GM12878 (cell line): ENCODE measurements at regions of chr20 and their contacts with region 1.

Region 1: GRCh38 chr20:36605399-36606157 is at the start of gene RAB5IF:
- DNase-seq: peak; percentile 99
- ATAC-seq: peak; percentile 92
- H3K4me3 ChIP-seq: peak within 1 kb of the TSS; percentile 98
- H3K27ac ChIP-seq: peak within 1 kb of the TSS; percentile 97
- H3K4me1 ChIP-seq: peaks cover 20% of the 10 kb centered on the region
- H3K27me3 ChIP-seq: no peaks in the 10 kb centered on the region
- CTCF ChIP-seq: peak; percentile 94 to 99 (median 96); a peak in 5 of 6 replicates
- EP300 ChIP-seq: peak in 1 of 2 experiments; percentile 54; a peak in 1 of 4 replicates
- POLR2A ChIP-seq: peak; percentile 96
- RAD21 ChIP-seq: peak; percentile 61
- polyA plus RNA-seq, gene RAB5IF: 19.4 to 62.9 TPM

Region 2: GRCh38 chr20:36555248-36555647 is 50.3 kb before region 1 on chr20:
- CTCF ChIA-PET with region 1: interaction called, 33 read pairs
- POLR2A ChIA-PET with region 1: interaction called, 7 read pairs
- RAD21 ChIA-PET with region 1: interaction called, 18 read pairs
- SMC1A ChIA-PET with region 1: interaction called, 18 read pairs
- in situ Hi-C with region 1: no loop called
- intact Hi-C with region 1: loop called (anchors 5 kb)
- DNase-seq: no peak
- ATAC-seq: no peak
- H3K4me3 ChIP-seq: no peak overlapping the region
- H3K27ac ChIP-seq: no peak overlapping the region
- H3K4me1 ChIP-seq: no peaks in the 10 kb centered on the region
- H3K27me3 ChIP-seq: no peaks in the 10 kb centered on the region
- CTCF ChIP-seq: no peak
- EP300 ChIP-seq: no peak
- POLR2A ChIP-seq: no peak
- RAD21 ChIP-seq: no peak

Region 3: DNA sequence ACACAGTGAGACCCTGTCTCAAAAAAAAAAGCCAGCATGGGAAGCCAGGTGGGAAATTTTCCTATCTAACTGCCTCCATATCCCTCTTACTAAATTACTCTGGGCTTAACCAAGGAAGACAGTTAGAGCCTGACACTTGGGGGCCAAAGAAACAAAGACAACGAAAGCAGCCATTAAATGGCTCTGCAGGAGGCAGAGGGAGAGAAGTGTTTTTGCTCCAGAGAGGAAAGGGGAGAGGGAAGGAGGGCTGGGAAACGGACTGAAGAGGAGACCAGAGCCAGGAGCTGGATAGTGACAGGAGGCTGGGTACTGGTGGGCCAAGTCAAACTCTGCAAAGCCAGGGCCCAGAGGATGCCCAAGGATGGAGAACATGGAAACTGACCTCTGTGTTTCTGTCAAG is 42.9 kb before region 1 on chr20:
- CTCF ChIA-PET with region 1: interaction called, 33 read pairs
- POLR2A ChIA-PET with region 1: interaction called, 7 read pairs
- RAD21 ChIA-PET with region 1: interaction called, 18 read pairs
- SMC1A ChIA-PET with region 1: interaction called, 18 read pairs
- in situ Hi-C with region 1: no loop called
- intact Hi-C with region 1: loop called (anchors 5 kb)
- DNase-seq: no peak
- ATAC-seq: no peak
- H3K4me3 ChIP-seq: no peak overlapping the region
- H3K27ac ChIP-seq: no peak overlapping the region
- H3K4me1 ChIP-seq: no peaks in the 10 kb centered on the region
- H3K27me3 ChIP-seq: no peaks in the 10 kb centered on the region
- CTCF ChIP-seq: no peak
- EP300 ChIP-seq: no peak
- POLR2A ChIP-seq: no peak
- RAD21 ChIP-seq: no peak

Region 4: GRCh38 chr20:36573103-36573794 is 32.3 kb before region 1 on chr20 and contains the start of gene TGIF2:
- CTCF ChIA-PET with region 1: interaction called, 94 read pairs
- POLR2A ChIA-PET with region 1: interaction called, 53 read pairs
- RAD21 ChIA-PET with region 1: interaction called, 76 read pairs
- SMC1A ChIA-PET with region 1: interaction called, 83 read pairs
- in situ Hi-C with region 1: no loop called
- intact Hi-C with region 1: loop called (anchors 1 kb)
- DNase-seq: peak; percentile 48
- ATAC-seq: peak; percentile 81
- H3K4me3 ChIP-seq: peak within 1 kb of the TSS; percentile 94
- H3K27ac ChIP-seq: peak within 1 kb of the TSS; percentile 96
- H3K4me1 ChIP-seq: peaks cover 5% of the 10 kb centered on the region
- H3K27me3 ChIP-seq: no peaks in the 10 kb centered on the region
- CTCF ChIP-seq: no peak
- EP300 ChIP-seq: 0 out of 4 replicates have a peak, but pooled peaks of 1 of the 2 experiments have one; percentile 27
- POLR2A ChIP-seq: peak; percentile 85
- RAD21 ChIP-seq: no peak
- polyA plus RNA-seq, gene TGIF2: 13.1 to 26.4 TPM

Region 5: DNA sequence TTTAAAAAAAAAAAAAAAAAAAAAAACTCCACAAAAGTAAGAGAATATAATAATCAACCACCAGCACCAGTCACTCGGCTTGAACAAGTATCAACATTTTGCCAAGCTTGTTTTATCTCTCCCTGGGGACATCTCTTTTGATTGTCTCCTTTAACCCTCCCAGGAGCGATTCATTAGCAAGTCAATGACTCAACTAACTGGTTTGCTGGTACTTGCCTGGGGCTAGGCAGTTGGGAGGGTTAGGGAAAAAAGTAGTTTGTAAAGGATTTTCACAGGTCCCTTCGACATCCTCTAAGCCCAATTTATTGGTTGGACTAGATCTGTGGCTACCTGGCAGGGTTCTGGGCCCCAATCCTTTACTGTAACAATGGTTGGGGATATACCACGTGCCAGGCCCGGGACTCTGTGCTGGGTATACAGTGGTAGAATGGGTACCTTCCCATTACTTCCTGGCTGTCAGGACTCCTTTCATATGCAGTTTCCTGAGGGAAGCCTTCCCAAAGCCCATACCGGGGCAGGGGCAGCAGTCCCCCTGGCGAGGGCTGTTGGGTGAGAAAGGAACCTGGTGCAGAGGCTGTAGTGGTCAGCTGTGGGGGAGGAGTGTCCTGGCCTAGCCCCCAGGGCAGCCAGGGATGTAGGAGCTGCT is 20.0 kb before region 1 on chr20:
- CTCF ChIA-PET with region 1: interaction called, 10 read pairs
- POLR2A ChIA-PET with region 1: interaction called, 17 read pairs
- RAD21 ChIA-PET with region 1: interaction called, 7 read pairs
- SMC1A ChIA-PET with region 1: interaction called, 32 read pairs
- in situ Hi-C with region 1: no loop called
- intact Hi-C with region 1: no loop called
- DNase-seq: no peak
- ATAC-seq: no peak
- H3K4me3 ChIP-seq: no peak overlapping the region
- H3K27ac ChIP-seq: no peak overlapping the region
- H3K4me1 ChIP-seq: peaks cover 5% of the 10 kb centered on the region
- H3K27me3 ChIP-seq: no peaks in the 10 kb centered on the region
- CTCF ChIP-seq: no peak
- EP300 ChIP-seq: no peak
- POLR2A ChIP-seq: no peak; the same call in 1 of the 2 replicates
- RAD21 ChIP-seq: no peak

Region 6: DNA sequence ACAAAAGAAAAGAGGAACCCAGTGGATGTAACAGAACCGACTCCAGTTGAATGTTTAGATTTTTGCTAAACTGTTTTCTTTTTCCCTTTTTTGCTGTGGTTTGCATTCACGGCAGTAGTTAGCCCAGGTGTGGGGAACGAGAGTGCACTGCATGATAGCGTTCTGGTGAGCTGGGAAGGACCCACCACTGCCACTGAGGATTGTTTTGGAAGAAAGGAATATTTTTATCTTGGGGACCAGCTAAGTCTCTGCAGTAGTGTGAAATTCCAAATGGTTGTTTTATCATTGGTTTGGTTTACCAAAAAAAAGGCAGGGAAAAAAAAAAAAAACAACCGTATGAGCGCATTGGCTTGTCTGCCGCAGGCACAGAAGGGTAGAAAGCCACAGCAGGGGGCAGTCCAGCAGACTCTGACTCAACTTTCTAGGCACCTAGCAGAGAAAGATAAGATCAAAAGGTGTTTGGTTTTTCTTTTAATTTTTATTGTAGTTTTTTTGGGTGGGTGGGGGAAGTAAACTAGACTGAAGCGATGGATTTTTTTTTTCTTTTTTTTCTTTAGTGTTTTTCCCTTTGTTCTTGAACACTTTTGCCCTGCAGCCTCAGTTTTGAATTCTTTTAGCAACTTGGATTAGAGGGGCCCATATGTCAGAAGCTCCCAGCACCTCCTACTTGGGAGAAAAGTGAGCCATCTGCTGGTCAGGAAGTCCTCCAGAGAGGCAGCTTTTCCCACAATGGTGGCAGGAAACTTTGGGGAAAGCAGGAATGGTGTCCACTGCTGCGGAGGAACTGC is 13.5 kb before region 1 on chr20:
- CTCF ChIA-PET with region 1: interaction called, 74 read pairs
- POLR2A ChIA-PET with region 1: interaction called, 87 read pairs
- RAD21 ChIA-PET with region 1: interaction called, 92 read pairs
- SMC1A ChIA-PET with region 1: interaction called, 87 read pairs
- in situ Hi-C with region 1: no loop called
- intact Hi-C with region 1: no loop called
- DNase-seq: no peak
- ATAC-seq: no peak
- H3K4me3 ChIP-seq: no peak overlapping the region
- H3K27ac ChIP-seq: no peak overlapping the region
- H3K4me1 ChIP-seq: peaks cover 41% of the 10 kb centered on the region
- H3K27me3 ChIP-seq: no peaks in the 10 kb centered on the region
- CTCF ChIP-seq: peak in 2 of 3 experiments; percentile 23 to 43; a peak in 3 of 6 replicates
- EP300 ChIP-seq: no peak
- POLR2A ChIP-seq: no peak
- RAD21 ChIP-seq: no peak

Region 7: GRCh38 chr20:36754656-36755222 is 149.2 kb after region 1 on chr20:
- CTCF ChIA-PET with region 1: interaction called, 67 read pairs
- POLR2A ChIA-PET with region 1: no interaction called
- RAD21 ChIA-PET with region 1: interaction called, 4 read pairs
- SMC1A ChIA-PET with region 1: interaction called, 3 read pairs
- in situ Hi-C with region 1: no loop called
- intact Hi-C with region 1: no loop called
- DNase-seq: no peak
- ATAC-seq: peak; percentile 85
- H3K4me3 ChIP-seq: no peak overlapping the region
- H3K27ac ChIP-seq: 0 out of 2 replicates have a peak overlapping the region, but pooled peaks have one; percentile 20
- H3K4me1 ChIP-seq: peaks cover 13% of the 10 kb centered on the region
- H3K27me3 ChIP-seq: no peaks in the 10 kb centered on the region
- CTCF ChIP-seq: peak; percentile 77 to 81 (median 79)
- EP300 ChIP-seq: no peak
- POLR2A ChIP-seq: no peak
- RAD21 ChIP-seq: peak; percentile 76

Region 8: GRCh38 chr20:36908603-36909002 is 303.0 kb after region 1 on chr20:
- CTCF ChIA-PET with region 1: no interaction called
- POLR2A ChIA-PET with region 1: no interaction called
- RAD21 ChIA-PET with region 1: no interaction called
- SMC1A ChIA-PET with region 1: no interaction called
- in situ Hi-C with region 1: no loop called
- intact Hi-C with region 1: no loop called
- DNase-seq: peak; percentile 17
- ATAC-seq: peak; percentile 57
- H3K4me3 ChIP-seq: no peak overlapping the region
- H3K27ac ChIP-seq: peak overlapping the region; percentile 10; the same call in 1 of the 2 replicates
- H3K4me1 ChIP-seq: peaks cover 5% of the 10 kb centered on the region
- H3K27me3 ChIP-seq: no peaks in the 10 kb centered on the region
- CTCF ChIP-seq: no peak
- EP300 ChIP-seq: no peak
- POLR2A ChIP-seq: no peak
- RAD21 ChIP-seq: no peak